Mammary epithelial cell (primary cell): ENCODE measurements at regions of chr20 and their contacts with region 1.

Region 1: GRCh38 chr20:11454966-11455799 is 462.5 kb upstream of the BTBD3 start:
- DNase-seq: peak; percentile 86
- H3K4me3 ChIP-seq: peak overlapping the region; percentile 33 to 48 (median 37)
- H3K27ac ChIP-seq: peak overlapping the region; percentile 93
- H3K4me1 ChIP-seq: peaks cover 71% of the 10 kb centered on the region
- H3K27me3 ChIP-seq: no peaks in the 10 kb centered on the region
- CTCF ChIP-seq: no peak

Region 2: GRCh38 chr20:11394145-11394833 is 60.9 kb before region 1 on chr20:
- CTCF ChIA-PET with region 1: no interaction called
- dilution Hi-C with region 1: loop called (anchors 5 kb)
- in situ Hi-C with region 1: no loop called
- intact Hi-C with region 1: loop called (anchors 2 kb)
- DNase-seq: peak; percentile 97
- H3K4me3 ChIP-seq: no peak overlapping the region
- H3K27ac ChIP-seq: peak overlapping the region; percentile 95
- H3K4me1 ChIP-seq: peaks cover 31% of the 10 kb centered on the region
- H3K27me3 ChIP-seq: no peaks in the 10 kb centered on the region
- CTCF ChIP-seq: no peak

Region 3: GRCh38 chr20:11716239-11716944 is 261.2 kb after region 1 on chr20:
- CTCF ChIA-PET with region 1: no interaction called
- dilution Hi-C with region 1: no loop called
- in situ Hi-C with region 1: no loop called
- intact Hi-C with region 1: no loop called
- DNase-seq: peak; percentile 71
- H3K4me3 ChIP-seq: no peak overlapping the region
- H3K27ac ChIP-seq: no peak overlapping the region
- H3K4me1 ChIP-seq: peaks cover 10% of the 10 kb centered on the region
- H3K27me3 ChIP-seq: no peaks in the 10 kb centered on the region
- CTCF ChIP-seq: peak; percentile 45 to 51